Caco-2 (cell line): ENCODE measurements at regions of chr16 and their contacts with region 1.

Region 1: GRCh38 chr16:24689145-24689544 is 40.3 kb upstream of the TNRC6A start:
- DNase-seq: peak in 1 of 2 experiments; percentile 35
- H3K4me3 ChIP-seq: no peak overlapping the region
- H3K4me3 Mint-ChIP-seq: no peak overlapping the region
- H3K27ac Mint-ChIP-seq: no peak overlapping the region
- H3K4me1 ChIP-seq: peaks cover 9% of the 10 kb centered on the region; the same call in 1 of the 2 replicates
- H3K4me1 Mint-ChIP-seq: peaks cover 10% of the 10 kb centered on the region
- H3K27me3 ChIP-seq: no peaks in the 10 kb centered on the region
- H3K27me3 Mint-ChIP-seq: no peaks in the 10 kb centered on the region
- CTCF ChIP-seq: peak; percentile 46 to 58

Region 2: GRCh38 chr16:24589997-24590396 is 99.1 kb before region 1 on chr16:
- CTCF ChIA-PET with region 1: no interaction called
- POLR2A ChIA-PET with region 1: no interaction called
- intact Hi-C with region 1: loop called (anchors 10 kb)
- DNase-seq: no peak
- H3K4me3 ChIP-seq: no peak overlapping the region
- H3K4me3 Mint-ChIP-seq: no peak overlapping the region
- H3K27ac Mint-ChIP-seq: no peak overlapping the region
- H3K4me1 ChIP-seq: no peaks in the 10 kb centered on the region
- H3K4me1 Mint-ChIP-seq: no peaks in the 10 kb centered on the region
- H3K27me3 ChIP-seq: no peaks in the 10 kb centered on the region
- H3K27me3 Mint-ChIP-seq: peaks cover 7% of the 10 kb centered on the region
- CTCF ChIP-seq: no peak

Region 3: DNA sequence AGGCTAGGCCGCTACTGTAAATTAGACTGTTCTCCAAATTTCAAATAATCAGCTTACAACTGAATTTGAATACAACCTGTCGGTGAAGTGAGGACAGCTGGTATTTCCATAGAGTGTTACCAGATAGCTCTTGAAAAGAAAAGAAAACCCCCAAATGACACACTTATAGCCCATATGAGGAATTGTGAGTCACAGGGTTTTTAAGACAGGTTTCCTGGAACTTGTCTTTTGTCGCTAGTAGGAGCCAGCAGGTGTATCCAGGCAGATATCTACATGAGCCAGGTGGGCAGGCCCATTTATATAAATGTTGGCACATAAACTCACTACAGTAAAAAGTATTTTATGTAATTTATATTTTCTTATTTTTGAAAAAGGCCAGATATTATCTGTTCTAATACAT is 64.3 kb after region 1 on chr16:
- CTCF ChIA-PET with region 1: no interaction called
- POLR2A ChIA-PET with region 1: no interaction called
- intact Hi-C with region 1: no loop called
- DNase-seq: no peak
- H3K4me3 ChIP-seq: no peak overlapping the region
- H3K4me3 Mint-ChIP-seq: no peak overlapping the region
- H3K27ac Mint-ChIP-seq: no peak overlapping the region
- H3K4me1 ChIP-seq: no peaks in the 10 kb centered on the region
- H3K4me1 Mint-ChIP-seq: peaks cover 8% of the 10 kb centered on the region
- H3K27me3 ChIP-seq: no peaks in the 10 kb centered on the region
- H3K27me3 Mint-ChIP-seq: no peaks in the 10 kb centered on the region
- CTCF ChIP-seq: no peak